ENCODE measurements at regions of chr2 and their contacts with region 1.

Region 1: GRCh38 chr2:12716282-12717190 is at the start of gene TRIB2:
- DNase-seq: peak; percentile 90
- ATAC-seq: peak; percentile 74
- H3K4me3 Mint-ChIP-seq: peak within 1 kb of the TSS; percentile 92
- H3K27ac Mint-ChIP-seq: peak within 1 kb of the TSS; percentile 95
- H3K4me1 Mint-ChIP-seq: peaks cover 48% of the 10 kb centered on the region
- H3K27me3 Mint-ChIP-seq: no peaks in the 10 kb centered on the region
- total RNA-seq, gene TRIB2: 2.7 to 3.7 TPM

Region 2: DNA sequence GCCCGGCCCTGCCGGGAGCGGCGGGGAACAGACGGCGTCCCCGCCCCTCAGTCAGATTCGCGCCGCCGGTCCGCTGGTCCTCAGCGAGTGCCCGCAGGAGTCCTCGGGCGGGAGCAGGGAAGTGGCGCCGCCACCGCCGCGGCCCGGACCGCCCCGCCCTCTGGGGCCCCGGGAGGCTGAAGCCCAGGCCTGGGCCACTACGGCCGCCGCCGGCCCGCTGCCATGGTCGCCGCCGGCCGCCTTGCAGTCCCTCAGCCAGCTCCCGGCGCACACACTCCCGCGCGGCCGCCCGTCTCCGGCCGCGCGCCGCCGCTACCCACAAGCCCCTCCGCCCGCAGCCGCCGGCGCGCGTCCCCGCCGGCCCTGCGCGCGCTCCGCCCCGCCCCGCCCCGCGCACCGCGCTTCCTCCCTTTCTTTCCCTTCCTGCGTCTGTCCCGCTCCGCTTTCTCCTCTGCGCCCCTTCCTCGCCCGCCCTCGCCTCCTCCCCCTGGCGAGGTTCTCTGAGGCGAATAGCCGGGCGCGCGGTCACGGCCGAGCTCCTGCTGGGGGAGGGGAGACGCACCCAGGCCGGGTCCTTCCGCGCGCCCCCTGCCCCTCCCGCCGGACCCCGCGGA is 1372.1 kb before region 1 on chr2 and contains the start of gene ROCK2:
- CTCF ChIA-PET with region 1: no interaction called
- POLR2A ChIA-PET with region 1: no interaction called
- intact Hi-C with region 1: loop called in 1 of 2 experiments (anchors 5 kb)
- DNase-seq: peak; percentile 81
- ATAC-seq: peak; percentile 68
- H3K4me3 Mint-ChIP-seq: peak within 1 kb of the TSS; percentile 97
- H3K27ac Mint-ChIP-seq: peak within 1 kb of the TSS; percentile 89
- H3K4me1 Mint-ChIP-seq: peaks cover 31% of the 10 kb centered on the region
- H3K27me3 Mint-ChIP-seq: no peaks in the 10 kb centered on the region
- total RNA-seq, gene ROCK2: 14.4 to 16.7 TPM

Region 3: GRCh38 chr2:11863513-11864328 is 852.8 kb before region 1 on chr2:
- CTCF ChIA-PET with region 1: interaction called, 3 read pairs
- POLR2A ChIA-PET with region 1: no interaction called
- intact Hi-C with region 1: loop called (anchors 1 to 10 kb)
- DNase-seq: peak; percentile 80
- ATAC-seq: peak; percentile 49
- H3K4me3 Mint-ChIP-seq: peak overlapping the region; percentile 11
- H3K27ac Mint-ChIP-seq: no peak overlapping the region
- H3K4me1 Mint-ChIP-seq: peaks cover 29% of the 10 kb centered on the region
- H3K27me3 Mint-ChIP-seq: peaks cover 13% of the 10 kb centered on the region

Region 4: GRCh38 chr2:12064153-12064552 is 652.4 kb before region 1 on chr2:
- CTCF ChIA-PET with region 1: no interaction called
- POLR2A ChIA-PET with region 1: no interaction called
- intact Hi-C with region 1: no loop called
- DNase-seq: no peak
- ATAC-seq: no peak
- H3K4me3 Mint-ChIP-seq: no peak overlapping the region
- H3K27ac Mint-ChIP-seq: no peak overlapping the region
- H3K4me1 Mint-ChIP-seq: peaks cover 4% of the 10 kb centered on the region
- H3K27me3 Mint-ChIP-seq: no peaks in the 10 kb centered on the region

Region 5: GRCh38 chr2:12293874-12294273 is 422.7 kb before region 1 on chr2:
- CTCF ChIA-PET with region 1: interaction called, 6 read pairs
- POLR2A ChIA-PET with region 1: no interaction called
- intact Hi-C with region 1: loop called (anchors 2 to 5 kb)
- DNase-seq: no peak
- ATAC-seq: peak; percentile 93
- H3K4me3 Mint-ChIP-seq: no peak overlapping the region
- H3K27ac Mint-ChIP-seq: peak overlapping the region; percentile 66
- H3K4me1 Mint-ChIP-seq: peaks cover 46% of the 10 kb centered on the region
- H3K27me3 Mint-ChIP-seq: peaks cover 27% of the 10 kb centered on the region

Region 6: DNA sequence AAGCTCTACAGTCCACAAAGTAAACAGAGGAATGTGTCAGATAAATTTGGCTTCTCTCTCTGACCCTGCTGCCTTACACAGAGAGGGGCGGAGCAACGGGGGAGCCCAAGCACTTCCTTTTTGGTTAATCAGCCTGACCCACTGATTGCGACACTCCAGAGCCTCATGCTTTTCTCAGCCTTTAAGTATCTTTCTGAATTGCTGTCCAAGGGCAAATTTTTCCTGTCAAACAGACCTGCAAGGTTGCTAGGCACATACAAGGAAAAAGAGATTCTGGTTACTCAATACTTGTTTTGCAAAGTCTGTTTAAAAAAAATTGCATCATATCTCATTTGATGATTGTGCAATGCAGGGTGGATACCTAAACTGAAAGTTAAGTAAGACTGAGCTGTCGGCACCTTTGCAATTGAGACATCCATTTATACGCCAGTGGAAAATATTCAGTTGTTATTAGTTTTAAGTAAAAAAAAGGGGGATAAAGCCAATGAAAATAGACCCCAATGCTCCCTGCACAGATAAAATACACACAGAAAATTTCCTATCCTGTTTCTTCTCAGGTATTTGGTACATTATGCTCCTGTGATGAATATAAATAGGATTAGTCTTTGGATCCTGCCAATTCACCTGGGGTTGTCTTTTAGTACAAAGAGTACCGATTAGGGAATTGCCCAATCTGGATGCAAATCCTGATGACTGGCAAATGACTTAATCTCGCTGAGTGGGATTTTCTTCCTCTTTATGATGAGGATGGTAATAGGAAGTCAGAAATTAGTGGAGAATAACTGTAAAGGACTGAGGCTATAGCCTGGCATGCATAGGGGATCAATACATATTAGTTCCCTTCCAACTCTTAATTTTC is 260.0 kb before region 1 on chr2:
- CTCF ChIA-PET with region 1: no interaction called
- POLR2A ChIA-PET with region 1: no interaction called
- intact Hi-C with region 1: loop called in 1 of 2 experiments (anchors 1 kb)
- DNase-seq: peak; percentile 63
- ATAC-seq: peak; percentile 83
- H3K4me3 Mint-ChIP-seq: peak overlapping the region; percentile 56
- H3K27ac Mint-ChIP-seq: peak overlapping the region; percentile 81
- H3K4me1 Mint-ChIP-seq: peaks cover 31% of the 10 kb centered on the region
- H3K27me3 Mint-ChIP-seq: no peaks in the 10 kb centered on the region

Region 7: DNA sequence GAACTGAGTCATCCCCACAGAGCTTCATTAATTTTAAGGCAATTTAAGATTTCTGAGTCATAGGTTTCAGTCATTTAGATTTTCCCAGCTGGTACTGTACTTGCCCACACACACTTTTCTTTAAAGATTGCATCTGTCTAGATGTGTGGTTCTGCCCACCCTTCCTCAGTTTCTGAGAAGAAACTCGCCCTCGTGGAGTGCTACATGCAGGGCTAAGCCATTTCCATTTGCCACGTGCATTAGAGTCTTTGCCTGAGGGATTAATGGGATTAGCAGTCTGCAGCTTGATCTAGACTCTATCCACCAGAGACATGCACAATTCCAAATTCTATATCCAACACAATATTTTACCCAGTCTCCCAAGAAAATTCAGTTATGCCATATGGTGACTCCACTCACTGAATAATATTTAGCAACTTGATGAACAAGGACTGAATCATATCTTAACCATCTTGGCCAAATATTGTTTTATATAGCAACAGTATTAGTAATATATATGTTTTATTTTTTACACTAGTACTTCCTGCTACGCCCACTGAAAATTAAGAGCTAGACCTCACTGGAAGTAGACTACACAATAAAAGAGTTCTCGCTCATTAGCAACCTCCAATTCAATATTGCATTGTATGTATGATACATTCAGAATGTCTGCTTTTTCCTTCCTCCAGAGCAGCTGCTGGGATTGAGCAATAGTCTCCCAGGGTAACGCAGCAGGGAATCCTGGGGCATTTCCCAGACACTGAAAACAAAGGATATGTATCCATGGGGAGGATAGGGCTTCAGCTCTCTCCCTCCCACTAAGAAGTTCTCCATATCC is 14.0 kb before region 1 on chr2:
- CTCF ChIA-PET with region 1: interaction called, 10 read pairs
- POLR2A ChIA-PET with region 1: no interaction called
- intact Hi-C with region 1: no loop called
- DNase-seq: no peak
- ATAC-seq: peak; percentile 86
- H3K4me3 Mint-ChIP-seq: no peak overlapping the region
- H3K27ac Mint-ChIP-seq: no peak overlapping the region
- H3K4me1 Mint-ChIP-seq: peaks cover 37% of the 10 kb centered on the region
- H3K27me3 Mint-ChIP-seq: no peaks in the 10 kb centered on the region

Region 8: DNA sequence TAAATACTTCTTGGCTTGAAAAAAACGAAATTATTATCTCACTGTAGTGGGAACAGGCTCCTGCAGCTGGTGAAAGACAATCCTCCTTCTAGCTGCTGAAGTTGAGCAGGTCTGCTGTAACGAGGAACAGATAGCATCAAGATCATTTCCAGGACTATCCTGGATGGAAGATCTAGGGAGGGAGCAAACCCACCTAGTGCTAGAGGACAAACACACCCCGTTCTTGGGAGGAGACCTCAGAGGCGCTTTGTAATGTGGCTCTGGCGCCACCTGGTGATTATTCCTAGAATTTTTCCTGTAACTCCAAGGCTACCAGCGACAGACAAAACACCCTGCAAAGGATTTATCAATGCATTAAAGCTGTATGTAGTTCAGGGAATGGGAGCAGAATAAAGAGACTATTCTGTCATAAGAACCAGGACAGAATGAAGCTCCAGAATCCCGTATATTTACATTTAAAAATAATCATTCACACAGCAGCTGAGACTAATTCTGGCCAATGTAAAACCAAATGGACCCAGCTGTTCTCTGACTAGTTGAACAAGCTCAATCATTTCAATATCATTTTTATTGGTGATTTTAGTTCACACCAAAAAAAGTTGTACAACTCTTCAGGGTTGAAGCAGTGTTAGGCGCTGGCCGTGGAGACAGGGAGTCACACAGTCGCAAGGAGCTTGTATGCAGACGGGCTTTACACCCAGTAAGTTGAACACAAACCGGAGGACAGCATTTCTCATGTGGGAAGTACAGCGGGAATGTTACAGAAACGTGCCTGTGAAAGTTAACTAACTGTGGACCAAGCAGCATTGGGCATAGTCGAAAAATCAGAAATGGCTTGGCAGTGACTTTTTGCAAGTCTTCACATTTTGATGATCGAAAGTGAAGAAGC is 290.5 kb after region 1 on chr2:
- CTCF ChIA-PET with region 1: interaction called, 6 read pairs
- POLR2A ChIA-PET with region 1: interaction called, 4 read pairs
- intact Hi-C with region 1: loop called (anchors 1 to 2 kb)
- DNase-seq: peak; percentile 74
- ATAC-seq: peak; percentile 63
- H3K4me3 Mint-ChIP-seq: no peak overlapping the region
- H3K27ac Mint-ChIP-seq: no peak overlapping the region
- H3K4me1 Mint-ChIP-seq: peaks cover 3% of the 10 kb centered on the region
- H3K27me3 Mint-ChIP-seq: peaks cover 11% of the 10 kb centered on the region

Measured in activated CD4-positive, alpha-beta T cell treated with anti-CD3 and anti-CD28 coated beads for 36 hours (primary cell).